Common myeloid progenitor, CD34-positive (primary cell): ENCODE measurements at regions of chr15 and their contacts with region 1.

Region 1: GRCh38 chr15:50051803-50052419 is 67.1 kb downstream of the ATP8B4 start:
- DNase-seq: peak; percentile 66 to 75 (median 71)
- H3K4me3 ChIP-seq: peak overlapping the region in 1 of 7 experiments; percentile 2
- H3K27ac ChIP-seq: peak overlapping the region in 1 of 2 experiments; percentile 25
- H3K4me1 ChIP-seq: peaks cover 20 to 60% (median 49%) of the 10 kb centered on the region in 4 experiments
- H3K27me3 ChIP-seq: no peaks in the 10 kb centered on the region

Region 2: DNA sequence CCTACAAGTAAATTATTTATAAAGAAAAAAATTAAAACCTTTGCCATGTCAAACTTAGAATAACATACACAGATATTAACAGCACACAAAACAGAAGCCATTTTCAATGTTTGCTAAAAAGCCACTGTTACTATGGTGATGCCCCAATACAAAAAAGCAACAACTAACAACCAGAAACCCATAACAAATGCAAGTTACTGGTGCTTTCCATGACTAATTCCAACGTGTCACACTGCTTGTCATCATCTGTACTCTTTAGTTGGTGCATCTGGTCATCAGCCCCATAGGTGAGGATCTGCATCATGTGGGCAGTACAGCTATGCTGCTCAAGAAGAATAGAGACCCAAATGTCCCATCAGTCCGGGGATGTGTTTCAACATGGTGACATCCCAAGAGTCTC is 14.3 kb after region 1 on chr15:
- CTCF ChIA-PET with region 1: interaction called, 38 read pairs
- POLR2A ChIA-PET with region 1: interaction called, 7 read pairs
- DNase-seq: peak; percentile 90 to 97 (median 94)
- H3K4me3 ChIP-seq: no peak overlapping the region
- H3K27ac ChIP-seq: peak overlapping the region; percentile 96 to 98
- H3K4me1 ChIP-seq: peaks cover 42 to 99% (median 77%) of the 10 kb centered on the region in 4 experiments
- H3K27me3 ChIP-seq: no peaks in the 10 kb centered on the region

Region 3: DNA sequence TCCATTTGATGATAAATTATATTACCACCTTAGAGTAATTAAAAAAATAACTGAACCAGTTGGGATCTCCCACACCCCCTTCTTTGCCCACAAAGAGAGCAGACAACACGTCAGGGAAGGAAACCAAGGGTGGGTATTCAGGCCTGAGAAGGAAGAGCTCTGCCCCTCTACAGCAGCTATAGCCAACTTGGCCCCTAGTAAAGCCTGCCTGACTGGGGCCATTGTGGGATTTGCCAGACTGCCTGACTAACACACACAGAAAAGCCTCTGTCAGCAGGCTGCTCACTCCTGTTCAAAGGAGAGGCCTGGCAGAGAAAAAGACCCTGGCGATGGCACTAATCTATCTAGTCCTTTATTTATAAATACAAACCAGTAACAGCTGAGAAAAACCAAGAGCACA is 25.7 kb after region 1 on chr15:
- CTCF ChIA-PET with region 1: interaction called, 11 read pairs
- POLR2A ChIA-PET with region 1: no interaction called
- DNase-seq: peak in 2 of 3 donors; percentile 29 to 54
- H3K4me3 ChIP-seq: peak overlapping the region in 1 of 7 experiments; percentile 40
- H3K27ac ChIP-seq: peak overlapping the region; percentile 62 to 65
- H3K4me1 ChIP-seq: peaks cover 9 to 82% (median 49%) of the 10 kb centered on the region in 4 experiments
- H3K27me3 ChIP-seq: no peaks in the 10 kb centered on the region